IMR-90 (cell line): ENCODE measurements at regions of chr2 and their contacts with region 1.

Region 1: DNA sequence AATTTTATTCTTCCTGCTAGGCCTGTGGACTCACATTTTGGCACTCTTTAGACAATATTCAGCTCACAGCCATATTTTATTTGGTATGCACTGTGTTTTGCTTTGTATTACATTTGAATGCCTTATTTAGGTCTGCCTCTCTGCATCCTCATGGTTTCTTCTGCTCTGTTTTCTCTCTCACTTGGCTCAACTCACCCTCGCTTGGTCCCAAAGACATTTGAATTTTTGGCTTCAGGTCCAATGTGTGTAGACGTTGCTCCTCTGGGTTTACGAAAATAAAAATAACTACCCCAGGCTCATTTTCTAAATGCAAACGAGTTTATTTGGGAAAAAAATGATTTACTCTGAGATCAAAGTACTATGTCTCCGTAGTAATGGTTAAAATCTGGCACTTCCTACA is 91.1 kb upstream of the REG3A start:
- DNase-seq: no peak
- ATAC-seq: no peak
- H3K4me3 ChIP-seq: no peak overlapping the region
- H3K27ac ChIP-seq: no peak overlapping the region
- H3K4me1 ChIP-seq: no peaks in the 10 kb centered on the region
- H3K27me3 ChIP-seq: no peaks in the 10 kb centered on the region
- CTCF ChIP-seq: no peak
- POLR2A ChIP-seq: no peak
- RAD21 ChIP-seq: no peak

Region 2: DNA sequence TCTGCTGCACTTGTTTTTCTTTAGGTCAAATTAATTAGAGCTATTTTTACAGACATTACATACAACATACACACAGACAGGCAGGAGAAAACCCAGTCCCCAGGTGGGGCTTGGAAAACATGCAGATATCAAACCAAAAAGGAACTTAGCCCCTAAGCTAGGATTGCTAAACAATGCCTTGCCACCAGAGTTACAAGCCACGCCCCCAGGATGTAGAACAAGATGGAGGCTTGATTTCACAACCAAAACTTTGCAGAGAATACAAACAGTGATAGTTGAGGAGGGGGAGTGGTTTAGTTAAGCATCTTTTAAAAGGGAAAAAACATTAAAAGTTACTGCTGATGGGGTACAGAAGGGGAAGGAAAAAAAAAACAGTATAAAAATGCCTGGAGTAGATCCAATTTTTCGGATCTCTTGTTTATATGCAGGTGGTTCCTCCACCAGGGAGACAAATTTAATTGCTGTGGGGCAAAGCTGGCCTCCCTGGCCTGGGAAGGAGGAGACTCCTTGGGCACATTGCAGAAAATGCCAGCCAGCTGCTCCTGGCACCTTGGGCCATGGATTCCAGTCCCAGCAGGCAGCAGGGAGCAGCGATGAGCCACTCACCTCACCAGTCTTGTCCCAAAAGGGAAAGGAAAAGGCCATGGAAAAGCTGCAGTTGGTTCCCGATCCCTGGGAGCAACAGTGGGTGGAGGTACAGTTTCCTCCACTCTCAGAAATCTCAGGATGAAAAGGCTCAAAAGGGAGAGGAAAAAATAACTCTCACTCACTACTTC is 573.5 kb before region 1 on chr2:
- CTCF ChIA-PET with region 1: no interaction called
- POLR2A ChIA-PET with region 1: no interaction called
- dilution Hi-C with region 1: no loop called
- in situ Hi-C with region 1: no loop called
- intact Hi-C with region 1: loop called (anchors 10 kb)
- DNase-seq: no peak
- ATAC-seq: no peak
- H3K4me3 ChIP-seq: no peak overlapping the region
- H3K27ac ChIP-seq: no peak overlapping the region
- H3K4me1 ChIP-seq: no peaks in the 10 kb centered on the region
- H3K27me3 ChIP-seq: no peaks in the 10 kb centered on the region
- CTCF ChIP-seq: no peak
- POLR2A ChIP-seq: no peak
- RAD21 ChIP-seq: no peak

Region 3: GRCh38 chr2:78839259-78839658 is 411.4 kb before region 1 on chr2:
- CTCF ChIA-PET with region 1: no interaction called
- POLR2A ChIA-PET with region 1: no interaction called
- dilution Hi-C with region 1: no loop called
- in situ Hi-C with region 1: no loop called
- intact Hi-C with region 1: no loop called
- DNase-seq: no peak
- ATAC-seq: no peak
- H3K4me3 ChIP-seq: no peak overlapping the region
- H3K27ac ChIP-seq: no peak overlapping the region
- H3K4me1 ChIP-seq: no peaks in the 10 kb centered on the region
- H3K27me3 ChIP-seq: no peaks in the 10 kb centered on the region
- CTCF ChIP-seq: no peak
- POLR2A ChIP-seq: no peak
- RAD21 ChIP-seq: no peak

Region 4: DNA sequence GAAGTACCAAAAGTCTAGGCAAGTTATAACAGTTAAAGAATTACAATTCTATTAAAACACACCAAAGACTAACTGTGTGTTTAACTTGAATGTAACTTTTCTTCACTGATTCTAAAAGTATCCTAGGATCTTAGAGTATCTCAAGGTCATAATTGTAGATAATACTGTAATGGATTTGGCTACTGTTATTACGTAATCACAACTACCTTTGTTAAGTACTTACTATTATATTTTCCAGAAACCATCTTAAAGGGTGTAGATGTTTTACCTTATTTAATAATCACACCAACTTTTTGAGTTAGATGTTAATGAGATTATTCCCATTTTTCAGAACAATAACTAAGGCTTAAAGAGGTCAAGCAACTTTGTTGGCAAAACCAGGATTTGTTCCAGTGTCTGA is 70.2 kb after region 1 on chr2:
- CTCF ChIA-PET with region 1: no interaction called
- POLR2A ChIA-PET with region 1: no interaction called
- dilution Hi-C with region 1: no loop called
- in situ Hi-C with region 1: no loop called
- intact Hi-C with region 1: loop called (anchors 10 kb)
- DNase-seq: no peak
- ATAC-seq: no peak
- H3K4me3 ChIP-seq: no peak overlapping the region
- H3K27ac ChIP-seq: no peak overlapping the region
- H3K4me1 ChIP-seq: no peaks in the 10 kb centered on the region
- H3K27me3 ChIP-seq: no peaks in the 10 kb centered on the region
- CTCF ChIP-seq: no peak
- POLR2A ChIP-seq: no peak
- RAD21 ChIP-seq: no peak

Region 5: GRCh38 chr2:79649531-79649930 is 398.9 kb after region 1 on chr2:
- CTCF ChIA-PET with region 1: no interaction called
- POLR2A ChIA-PET with region 1: no interaction called
- dilution Hi-C with region 1: no loop called
- in situ Hi-C with region 1: no loop called
- intact Hi-C with region 1: no loop called
- DNase-seq: no peak
- ATAC-seq: no peak
- H3K4me3 ChIP-seq: no peak overlapping the region
- H3K27ac ChIP-seq: no peak overlapping the region
- H3K4me1 ChIP-seq: no peaks in the 10 kb centered on the region
- H3K27me3 ChIP-seq: no peaks in the 10 kb centered on the region
- CTCF ChIP-seq: no peak
- POLR2A ChIP-seq: no peak
- RAD21 ChIP-seq: no peak